Panc1 (cell line): ENCODE measurements at regions of chr5 and their contacts with region 1.

Region 1: DNA sequence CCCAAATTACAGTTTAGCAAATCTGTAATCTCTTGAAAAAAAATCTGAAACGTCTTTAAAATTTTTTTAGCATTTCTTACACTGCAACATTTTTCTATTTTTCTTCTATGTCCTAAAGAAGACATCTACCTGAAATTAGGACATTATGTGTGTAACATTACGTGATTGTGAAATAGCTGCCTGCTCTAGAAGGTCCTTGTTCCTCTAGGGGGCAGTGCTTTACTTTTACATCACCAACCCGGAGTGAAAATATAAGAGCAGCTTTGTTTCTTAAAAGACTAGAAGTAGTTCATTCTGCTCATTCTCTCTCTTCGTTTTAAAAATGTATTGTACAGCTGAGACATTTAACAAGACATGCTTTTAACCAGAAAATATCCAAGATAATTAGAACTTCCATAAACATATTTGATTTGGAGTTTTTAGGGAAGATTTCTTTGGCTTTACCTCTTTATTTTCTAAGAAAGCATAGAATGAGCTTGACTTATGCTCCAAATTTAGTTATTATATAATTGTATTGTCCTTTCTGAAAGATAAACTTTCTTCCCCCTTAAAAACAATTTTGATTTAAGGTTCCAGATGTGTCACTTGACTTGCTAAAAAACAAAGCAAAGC is 48.1 kb upstream of the RIOK2 start:
- DNase-seq: peak; percentile 65
- ATAC-seq: peak; percentile 91
- H3K4me3 ChIP-seq: no peak overlapping the region
- H3K27ac ChIP-seq: no peak overlapping the region
- H3K4me1 ChIP-seq: no peaks in the 10 kb centered on the region
- H3K27me3 ChIP-seq: no peaks in the 10 kb centered on the region
- CTCF ChIP-seq: peak; percentile 80; the same call in 1 of the 2 replicates

Region 2: GRCh38 chr5:97534166-97534565 is 303.0 kb after region 1 on chr5:
- CTCF ChIA-PET with region 1: interaction called, 4 read pairs
- POLR2A ChIA-PET with region 1: no interaction called
- in situ Hi-C with region 1: no loop called
- intact Hi-C with region 1: loop called (anchors 5 kb)
- DNase-seq: peak; percentile 85
- ATAC-seq: peak; percentile 78
- H3K4me3 ChIP-seq: no peak overlapping the region
- H3K27ac ChIP-seq: no peak overlapping the region
- H3K4me1 ChIP-seq: no peaks in the 10 kb centered on the region
- H3K27me3 ChIP-seq: no peaks in the 10 kb centered on the region
- CTCF ChIP-seq: peak; percentile 74

Region 3: GRCh38 chr5:98735806-98736507 is 1504.8 kb after region 1 on chr5:
- CTCF ChIA-PET with region 1: no interaction called
- POLR2A ChIA-PET with region 1: interaction called, 10 read pairs
- in situ Hi-C with region 1: no loop called
- intact Hi-C with region 1: no loop called
- DNase-seq: no peak
- ATAC-seq: no peak
- H3K4me3 ChIP-seq: no peak overlapping the region
- H3K27ac ChIP-seq: no peak overlapping the region
- H3K4me1 ChIP-seq: no peaks in the 10 kb centered on the region
- H3K27me3 ChIP-seq: no peaks in the 10 kb centered on the region
- CTCF ChIP-seq: no peak